ENCODE measurements at regions of chr17 and their contacts with region 1.

Region 1: GRCh38 chr17:75412455-75413317 is 7.2 kb upstream of the GRB2 start:
- DNase-seq: peak; percentile 84
- ATAC-seq: peak; percentile 83
- H3K4me3 Mint-ChIP-seq: peak overlapping the region; percentile 55
- H3K27ac Mint-ChIP-seq: peak overlapping the region; percentile 72
- H3K4me1 Mint-ChIP-seq: peaks cover 39% of the 10 kb centered on the region
- H3K27me3 Mint-ChIP-seq: peaks cover 2% of the 10 kb centered on the region

Region 2: DNA sequence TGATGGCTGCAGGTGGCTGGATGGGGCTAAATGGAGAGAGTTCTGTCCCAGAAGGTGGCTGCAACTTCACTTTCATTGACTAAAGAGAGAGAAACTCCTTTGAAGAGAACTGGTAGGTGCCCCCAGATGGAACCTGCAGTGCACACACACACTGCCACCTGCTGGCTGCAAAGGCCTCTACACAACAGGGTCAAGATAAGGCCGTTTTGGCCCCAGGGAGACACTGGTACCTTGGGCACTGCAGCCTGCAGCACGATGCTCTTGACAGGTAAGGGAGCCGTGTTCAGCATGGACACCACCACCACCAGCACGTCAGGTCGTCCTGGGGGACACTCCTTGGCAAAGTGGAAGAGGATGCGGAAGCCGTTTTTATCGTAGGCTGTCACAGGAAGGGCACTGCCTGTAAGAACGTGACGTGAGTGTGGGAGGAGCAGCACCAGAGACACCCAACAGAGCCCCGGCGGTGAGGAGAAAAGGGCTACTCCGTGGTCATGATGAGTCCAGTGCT is 173.9 kb before region 1 on chr17:
- CTCF ChIA-PET with region 1: interaction called, 13 read pairs
- POLR2A ChIA-PET with region 1: no interaction called
- DNase-seq: peak; percentile 76
- ATAC-seq: peak; percentile 86
- H3K4me3 Mint-ChIP-seq: no peak overlapping the region
- H3K27ac Mint-ChIP-seq: no peak overlapping the region
- H3K4me1 Mint-ChIP-seq: peaks cover 23% of the 10 kb centered on the region
- H3K27me3 Mint-ChIP-seq: no peaks in the 10 kb centered on the region

Region 3: DNA sequence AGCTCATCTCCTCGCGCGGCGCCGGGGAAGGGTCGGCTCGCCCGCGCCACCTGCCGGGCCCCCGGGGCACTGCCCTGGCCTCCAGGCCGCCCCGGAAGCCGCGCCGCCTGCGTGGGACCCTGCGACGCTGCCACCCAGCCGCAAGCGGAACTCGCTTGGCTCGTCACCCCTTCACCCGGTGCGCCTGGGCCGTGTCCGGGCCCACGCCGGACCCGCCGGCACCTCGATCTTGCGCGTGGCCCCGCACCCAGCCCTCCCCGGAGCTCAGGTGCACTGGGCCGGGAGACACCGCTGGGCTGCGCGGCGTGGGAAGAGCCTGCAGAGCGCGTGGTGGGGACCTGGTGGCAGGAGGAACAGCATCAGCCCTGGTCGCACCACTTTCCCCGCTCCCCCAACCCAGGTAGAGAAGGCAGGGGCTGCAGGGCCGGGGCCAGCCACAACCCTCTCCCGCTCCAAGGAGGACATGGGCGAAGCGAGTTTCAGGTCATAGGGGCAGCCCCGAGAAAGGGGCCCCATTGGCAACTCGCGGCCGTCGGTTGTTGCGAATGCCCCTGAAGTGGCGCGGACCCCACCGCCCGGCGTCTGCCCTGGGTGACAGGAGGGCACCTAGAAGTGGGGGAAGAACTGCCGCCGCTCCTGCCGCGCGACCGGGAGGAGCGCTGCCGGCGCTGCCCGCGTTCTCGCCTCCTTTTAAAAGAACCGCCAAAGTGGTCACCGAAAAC is 141.3 kb before region 1 on chr17:
- CTCF ChIA-PET with region 1: interaction called, 35 read pairs
- POLR2A ChIA-PET with region 1: interaction called, 9 read pairs
- DNase-seq: peak; percentile 89
- ATAC-seq: peak; percentile 85
- H3K4me3 Mint-ChIP-seq: peak overlapping the region; percentile 81
- H3K27ac Mint-ChIP-seq: peak overlapping the region; percentile 86
- H3K4me1 Mint-ChIP-seq: peaks cover 36% of the 10 kb centered on the region
- H3K27me3 Mint-ChIP-seq: no peaks in the 10 kb centered on the region

Region 4: GRCh38 chr17:75295201-75296158 is 117.2 kb before region 1 on chr17:
- CTCF ChIA-PET with region 1: interaction called, 32 read pairs
- POLR2A ChIA-PET with region 1: no interaction called
- DNase-seq: no peak
- ATAC-seq: no peak
- H3K4me3 Mint-ChIP-seq: no peak overlapping the region
- H3K27ac Mint-ChIP-seq: peak overlapping the region; percentile 81
- H3K4me1 Mint-ChIP-seq: peaks cover 26% of the 10 kb centered on the region
- H3K27me3 Mint-ChIP-seq: no peaks in the 10 kb centered on the region

Region 5: DNA sequence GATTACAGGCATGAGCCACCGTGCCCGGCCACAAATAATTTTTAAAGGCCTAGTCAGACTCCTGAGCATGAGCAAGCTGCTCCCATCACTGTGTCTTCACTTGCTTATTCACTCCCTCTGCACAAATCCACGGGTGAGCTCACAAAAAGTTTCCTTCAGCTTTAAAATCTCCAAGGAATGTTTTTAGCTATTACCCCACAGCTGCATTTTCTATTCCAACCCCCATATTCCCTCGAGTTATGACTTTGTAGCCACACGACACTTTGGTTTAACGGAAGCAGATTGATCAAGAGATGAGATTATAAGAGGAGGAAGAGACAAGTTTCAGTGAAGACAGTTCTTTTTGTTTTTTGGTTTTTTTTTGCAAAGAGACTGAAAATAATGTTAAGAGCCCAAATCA is 74.4 kb before region 1 on chr17:
- CTCF ChIA-PET with region 1: interaction called, 19 read pairs
- POLR2A ChIA-PET with region 1: no interaction called
- DNase-seq: no peak
- ATAC-seq: peak; percentile 54
- H3K4me3 Mint-ChIP-seq: peak overlapping the region; percentile 60
- H3K27ac Mint-ChIP-seq: peak overlapping the region; percentile 88
- H3K4me1 Mint-ChIP-seq: peaks cover 81% of the 10 kb centered on the region
- H3K27me3 Mint-ChIP-seq: no peaks in the 10 kb centered on the region

Region 6: GRCh38 chr17:75400326-75400939 is 12.3 kb before region 1 on chr17:
- CTCF ChIA-PET with region 1: interaction called, 10 read pairs
- POLR2A ChIA-PET with region 1: interaction called, 4 read pairs
- DNase-seq: no peak
- ATAC-seq: no peak
- H3K4me3 Mint-ChIP-seq: no peak overlapping the region
- H3K27ac Mint-ChIP-seq: no peak overlapping the region
- H3K4me1 Mint-ChIP-seq: peaks cover 50% of the 10 kb centered on the region
- H3K27me3 Mint-ChIP-seq: no peaks in the 10 kb centered on the region

Region 7: GRCh38 chr17:75445296-75445695 is 32.6 kb after region 1 on chr17:
- CTCF ChIA-PET with region 1: no interaction called
- POLR2A ChIA-PET with region 1: no interaction called
- DNase-seq: no peak
- ATAC-seq: no peak
- H3K4me3 Mint-ChIP-seq: no peak overlapping the region
- H3K27ac Mint-ChIP-seq: no peak overlapping the region
- H3K4me1 Mint-ChIP-seq: no peaks in the 10 kb centered on the region
- H3K27me3 Mint-ChIP-seq: no peaks in the 10 kb centered on the region